ENCODE measurements at regions of chr1 and their contacts with region 1.

Region 1: DNA sequence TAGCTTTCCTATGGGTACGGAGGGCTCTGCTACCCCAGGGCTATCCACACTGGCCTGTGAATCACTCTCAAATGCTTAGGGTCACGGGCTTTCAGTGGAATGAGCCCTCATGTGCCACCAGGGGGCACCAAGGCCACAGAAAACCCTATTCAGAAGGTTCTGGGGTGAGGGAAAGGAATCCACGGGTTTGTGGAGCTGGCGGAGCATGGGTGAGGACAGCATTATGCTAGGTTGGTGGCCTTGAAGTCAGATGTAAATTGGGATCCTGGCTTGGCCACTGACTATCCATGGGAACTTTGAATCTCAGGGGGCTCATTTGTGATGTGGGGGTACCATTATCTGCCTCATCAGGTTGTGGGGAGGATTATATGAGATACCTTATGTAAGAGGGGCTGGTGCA is 5.1 kb upstream of the LAMTOR5 start:
- DNase-seq: no peak
- H3K4me3 ChIP-seq: no peak overlapping the region
- H3K27ac ChIP-seq: no peak overlapping the region
- H3K27me3 ChIP-seq: peaks cover 6% of the 10 kb centered on the region
- CTCF ChIP-seq: peak; percentile 82

Region 2: DNA sequence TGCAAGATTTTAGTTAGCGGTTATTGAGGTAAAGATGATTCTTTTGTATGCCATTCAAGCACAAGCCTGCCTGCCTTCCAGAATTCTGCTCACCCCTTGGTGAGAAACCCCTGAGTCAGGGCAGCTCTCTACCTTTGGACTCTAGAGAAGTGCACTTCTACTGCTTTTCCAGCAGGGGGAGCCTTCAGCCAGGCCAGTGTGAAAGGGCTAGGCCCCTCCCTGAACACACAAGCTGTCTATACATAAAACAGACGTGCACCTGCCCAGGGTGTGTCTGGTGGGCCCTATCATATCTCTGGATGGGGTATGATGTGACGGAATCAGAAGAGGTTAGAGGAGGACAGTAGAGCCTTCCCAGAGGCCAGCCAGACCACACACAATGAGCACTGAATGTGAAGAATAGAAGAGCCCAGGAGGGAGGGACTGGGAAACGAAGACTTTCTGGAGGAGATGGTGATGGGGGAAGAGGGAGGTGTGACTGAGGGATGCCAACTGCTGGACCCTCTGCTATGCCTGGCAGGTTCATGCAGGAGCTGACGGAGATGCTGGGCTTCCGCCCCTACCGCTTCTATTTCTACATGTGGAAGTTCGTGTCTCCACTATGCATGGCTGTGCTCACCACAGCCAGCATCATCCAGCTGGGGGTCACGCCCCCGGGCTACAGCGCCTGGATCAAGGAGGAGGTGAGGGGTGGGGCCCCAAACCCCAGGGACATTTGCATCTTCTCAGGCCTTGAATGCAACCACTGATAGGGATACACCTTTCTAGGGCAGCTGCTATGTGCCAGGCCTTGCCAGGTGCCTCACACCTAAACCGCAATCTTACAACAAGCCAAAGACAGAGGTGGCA is 215.4 kb before region 1 on chr1:
- CTCF ChIA-PET with region 1: interaction called, 21 read pairs
- POLR2A ChIA-PET with region 1: no interaction called
- DNase-seq: no peak
- H3K4me3 ChIP-seq: no peak overlapping the region
- H3K27ac ChIP-seq: no peak overlapping the region
- H3K27me3 ChIP-seq: peaks cover 3% of the 10 kb centered on the region
- CTCF ChIP-seq: peak; percentile 97

Region 3: DNA sequence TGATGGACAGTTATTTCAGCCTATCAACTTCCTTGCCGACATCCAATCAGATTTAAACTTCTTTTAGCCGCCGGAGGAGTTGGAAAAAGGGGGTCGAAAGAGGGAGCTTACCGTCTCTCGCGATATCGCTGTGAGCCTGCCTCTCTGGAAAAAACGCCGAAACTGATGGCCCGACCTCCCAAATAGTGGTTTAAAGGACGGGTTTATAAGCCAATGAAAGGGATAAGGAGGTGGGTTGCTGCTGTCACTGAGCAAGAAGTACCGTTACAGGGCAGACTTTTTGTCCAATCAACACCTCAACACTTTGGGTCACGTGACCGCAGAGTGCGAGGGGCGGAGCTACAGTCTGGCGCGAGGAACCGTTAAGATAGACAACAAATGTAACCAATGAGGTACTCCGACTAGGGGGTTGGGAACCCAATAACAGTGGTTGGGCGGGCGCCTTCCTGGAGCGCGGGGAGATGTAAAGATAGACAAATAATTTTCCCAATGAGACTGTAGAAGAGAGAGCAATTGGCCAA is 73.6 kb before region 1 on chr1 and contains the start of gene RBM15:
- CTCF ChIA-PET with region 1: interaction called, 32 read pairs
- POLR2A ChIA-PET with region 1: interaction called, 3 read pairs
- DNase-seq: peak; percentile 100
- H3K4me3 ChIP-seq: peak within 1 kb of the TSS; percentile 98
- H3K27ac ChIP-seq: peak within 1 kb of the TSS; percentile 99
- H3K27me3 ChIP-seq: no peaks in the 10 kb centered on the region
- CTCF ChIP-seq: no peak
- polyA plus RNA-seq, gene RBM15: 8.9 and 9.6 TPM in 2 replicates

Region 4: GRCh38 chr1:110430366-110430765 is 17.8 kb after region 1 on chr1:
- CTCF ChIA-PET with region 1: interaction called, 15 read pairs
- POLR2A ChIA-PET with region 1: no interaction called
- DNase-seq: no peak
- H3K4me3 ChIP-seq: no peak overlapping the region
- H3K27ac ChIP-seq: no peak overlapping the region
- H3K27me3 ChIP-seq: peaks cover 43% of the 10 kb centered on the region
- CTCF ChIP-seq: no peak

Region 5: GRCh38 chr1:110449661-110450651 is 37.4 kb after region 1 on chr1:
- CTCF ChIA-PET with region 1: interaction called, 52 read pairs
- POLR2A ChIA-PET with region 1: no interaction called
- DNase-seq: no peak
- H3K4me3 ChIP-seq: no peak overlapping the region
- H3K27ac ChIP-seq: no peak overlapping the region
- H3K27me3 ChIP-seq: peaks cover 71% of the 10 kb centered on the region
- CTCF ChIP-seq: no peak

Measured in AG04450 (cell line).